WTC11 (cell line): ENCODE measurements at regions of chr17 and their contacts with region 1.

Region 1: DNA sequence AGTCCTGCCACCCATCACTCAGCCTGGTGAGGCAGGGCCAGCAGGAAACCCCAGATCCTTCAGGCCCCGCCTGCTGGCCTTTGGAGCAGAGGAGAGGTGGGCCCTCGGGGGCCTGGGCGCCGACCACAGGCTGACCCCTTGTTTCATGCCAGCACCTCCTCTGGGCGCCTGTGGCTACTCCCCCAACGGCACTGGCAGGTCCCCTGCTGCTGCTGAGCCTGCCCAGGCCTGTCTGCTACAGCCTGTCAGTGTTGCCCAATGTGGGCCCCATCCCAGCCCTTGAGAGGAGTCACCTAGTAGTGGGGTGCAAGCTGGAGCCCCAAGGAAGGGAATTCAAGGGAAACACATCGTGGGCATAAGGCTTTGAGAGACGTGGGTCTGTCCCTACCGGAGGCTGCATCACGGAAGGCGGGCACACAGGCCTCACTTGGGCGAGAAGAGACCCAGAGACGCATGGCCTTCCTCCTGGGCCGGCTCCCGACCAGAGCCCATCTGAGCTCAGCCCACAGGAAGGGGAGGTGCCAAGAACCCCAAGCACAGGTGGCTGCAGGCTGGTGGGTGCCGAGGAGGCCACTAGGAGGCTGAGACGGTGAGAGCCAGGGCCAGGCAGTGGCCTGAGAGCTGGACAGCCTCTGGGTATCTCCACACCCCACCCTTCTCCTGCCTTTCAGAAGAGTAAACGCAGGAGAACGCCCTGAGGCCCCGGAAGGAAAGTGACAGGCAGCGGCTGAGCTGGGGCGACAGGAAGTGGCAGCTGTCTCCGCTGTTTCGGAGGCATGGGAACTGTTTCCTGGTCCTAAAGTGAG is 8.0 kb upstream of the FASN start:
- DNase-seq: peak; percentile 77
- ATAC-seq: peak; percentile 83
- H3K4me3 Mint-ChIP-seq: no peak overlapping the region
- H3K27ac Mint-ChIP-seq: peak overlapping the region; percentile 53
- H3K4me1 Mint-ChIP-seq: peaks cover 44% of the 10 kb centered on the region
- H3K27me3 Mint-ChIP-seq: peaks cover 32% of the 10 kb centered on the region
- CTCF ChIP-seq: no peak

Region 2: DNA sequence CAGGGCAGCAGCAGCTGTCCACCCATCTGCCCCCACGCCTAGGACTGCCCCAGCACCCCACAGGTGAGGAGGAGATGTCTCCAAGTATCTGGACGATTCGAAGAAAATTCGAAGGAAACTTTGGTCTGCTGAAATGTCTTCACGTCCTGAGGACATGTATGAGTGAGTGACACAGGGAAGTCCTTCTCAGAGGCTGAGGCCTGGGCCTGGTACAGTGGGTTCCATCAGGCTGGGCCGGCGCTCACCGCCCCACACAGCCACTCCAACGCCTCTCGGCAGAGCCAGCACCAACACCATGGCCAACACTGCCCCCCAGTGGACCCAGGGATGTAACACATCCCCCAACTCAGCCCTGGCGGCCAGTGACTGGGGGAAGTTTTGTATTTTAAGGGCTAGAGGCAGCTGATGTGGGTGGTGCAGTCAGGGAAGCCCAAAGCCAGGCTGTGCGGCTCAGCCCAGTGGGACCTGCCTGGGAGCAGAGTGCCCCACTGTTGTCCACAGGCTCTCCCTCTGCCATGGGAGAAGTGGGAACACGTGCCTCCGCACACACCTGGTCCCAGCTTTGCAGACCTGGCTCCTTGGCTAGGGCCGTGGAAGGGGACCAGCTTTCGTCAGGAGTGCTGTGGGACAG is 47.8 kb after region 1 on chr17:
- CTCF ChIA-PET with region 1: interaction called, 25 read pairs
- POLR2A ChIA-PET with region 1: no interaction called
- DNase-seq: peak; percentile 89
- ATAC-seq: peak; percentile 95
- H3K4me3 Mint-ChIP-seq: no peak overlapping the region
- H3K27ac Mint-ChIP-seq: peak overlapping the region; percentile 36; the same call in 1 of the 2 replicates
- H3K4me1 Mint-ChIP-seq: 0 out of 2 replicates have a peak, but pooled peaks cover 3% of the 10 kb centered on the region
- H3K27me3 Mint-ChIP-seq: no peaks in the 10 kb centered on the region; the same call in 1 of the 2 replicates
- CTCF ChIP-seq: peak; percentile 84